ENCODE measurements at regions of chr4 and their contacts with region 1.

Region 1: GRCh38 chr4:13654158-13654797 is 26.8 kb upstream of the BOD1L1 start:
- DNase-seq: peak; percentile 50 to 82
- H3K4me3 ChIP-seq: peak overlapping the region; percentile 69
- H3K27ac ChIP-seq: no peak overlapping the region
- H3K4me1 ChIP-seq: peaks cover 20% of the 10 kb centered on the region
- H3K27me3 ChIP-seq: no peaks in the 10 kb centered on the region
- CTCF ChIP-seq: peak; percentile 83

Region 2: DNA sequence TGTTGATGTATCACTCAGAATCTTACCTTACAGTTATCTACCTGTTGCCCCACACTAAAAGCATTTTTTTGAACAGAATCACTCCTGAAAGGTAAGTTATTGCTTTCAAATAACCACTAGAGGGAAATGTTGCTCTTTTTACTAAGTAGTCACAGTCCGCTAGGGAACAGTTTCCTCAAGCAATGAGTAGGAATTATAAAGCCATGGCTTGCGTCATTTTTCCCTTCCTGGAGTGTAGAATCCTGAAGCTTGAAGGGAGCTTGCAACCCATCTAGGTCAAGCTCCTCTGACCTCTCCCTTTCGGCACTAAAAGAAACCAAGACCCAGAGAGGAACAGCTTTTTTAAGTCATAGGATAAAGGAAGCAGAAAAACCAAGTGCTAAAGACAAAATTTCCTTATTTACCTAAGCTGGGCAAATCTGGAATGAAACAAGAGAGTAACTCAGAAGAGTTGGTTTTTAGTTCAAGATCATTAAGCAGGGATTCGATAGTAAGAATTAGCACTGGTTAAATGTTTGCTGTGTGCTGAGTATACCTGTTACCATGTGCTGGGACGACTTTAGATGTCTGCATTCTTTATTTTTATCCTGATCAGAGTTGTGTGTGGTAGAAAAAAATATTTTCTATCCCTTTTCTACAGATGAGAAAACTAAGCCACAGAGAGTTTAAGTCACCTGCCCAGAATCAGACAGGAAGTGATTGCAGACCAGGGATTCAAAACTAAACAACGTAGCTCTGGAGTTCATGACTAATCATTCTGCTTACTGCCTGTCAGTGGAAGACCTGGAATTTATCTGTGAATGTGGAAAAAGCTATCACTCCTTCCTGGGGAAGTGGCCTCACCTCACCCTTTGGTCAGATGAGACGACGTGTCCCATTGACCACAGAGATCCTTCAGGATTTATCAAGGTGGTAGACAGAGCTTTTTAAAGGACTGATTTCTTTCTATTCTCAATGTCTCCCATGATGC is 801.7 kb before region 1 on chr4:
- CTCF ChIA-PET with region 1: interaction called, 5 read pairs
- POLR2A ChIA-PET with region 1: no interaction called
- intact Hi-C with region 1: loop called (anchors 5 kb)
- DNase-seq: peak; percentile 0 to 62
- H3K4me3 ChIP-seq: no peak overlapping the region
- H3K27ac ChIP-seq: no peak overlapping the region
- H3K4me1 ChIP-seq: no peaks in the 10 kb centered on the region
- H3K27me3 ChIP-seq: no peaks in the 10 kb centered on the region
- CTCF ChIP-seq: peak; percentile 64

Region 3: DNA sequence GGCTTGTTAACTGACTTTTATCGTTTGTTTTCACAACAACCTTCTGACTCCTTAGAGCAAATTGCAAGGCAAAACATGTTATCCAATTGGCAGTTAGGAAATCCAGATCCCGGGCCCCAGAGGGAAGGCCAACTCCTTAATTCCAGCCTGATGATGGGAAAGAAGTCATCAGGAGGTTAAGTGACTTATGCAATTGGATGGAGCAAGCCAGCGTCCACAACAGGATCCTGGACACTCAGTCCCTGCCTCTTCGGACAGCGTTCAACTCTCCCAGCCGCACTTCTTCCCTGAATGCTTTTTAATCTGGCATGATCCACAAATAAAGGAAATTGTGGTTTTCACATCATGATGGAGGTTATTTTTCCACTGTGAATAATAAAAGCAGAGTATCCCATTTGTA is 480.3 kb before region 1 on chr4:
- CTCF ChIA-PET with region 1: no interaction called
- POLR2A ChIA-PET with region 1: no interaction called
- intact Hi-C with region 1: no loop called
- DNase-seq: no peak
- H3K4me3 ChIP-seq: no peak overlapping the region
- H3K27ac ChIP-seq: no peak overlapping the region
- H3K4me1 ChIP-seq: no peaks in the 10 kb centered on the region
- H3K27me3 ChIP-seq: no peaks in the 10 kb centered on the region
- CTCF ChIP-seq: no peak

Region 4: DNA sequence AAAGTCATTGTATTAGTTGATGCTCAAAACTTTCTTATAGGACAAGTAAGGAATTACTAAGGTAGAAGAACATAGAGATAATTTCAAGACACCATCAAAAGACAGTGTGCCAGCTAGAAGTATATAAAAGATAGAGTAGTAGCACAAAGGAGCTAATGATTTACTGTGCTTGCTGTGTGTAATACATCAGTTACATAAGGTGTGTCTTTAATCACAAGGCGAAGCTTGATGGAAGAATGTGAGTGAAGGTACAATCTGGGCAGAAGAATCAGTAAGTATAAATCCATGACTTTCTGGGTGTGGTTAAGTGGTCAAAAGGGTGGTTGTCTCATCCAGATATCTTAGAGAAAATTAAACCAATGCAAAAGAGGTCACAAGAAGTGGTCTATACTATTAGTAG is 68.4 kb after region 1 on chr4:
- CTCF ChIA-PET with region 1: no interaction called
- POLR2A ChIA-PET with region 1: no interaction called
- intact Hi-C with region 1: no loop called
- DNase-seq: no peak
- H3K4me3 ChIP-seq: no peak overlapping the region
- H3K27ac ChIP-seq: no peak overlapping the region
- H3K4me1 ChIP-seq: no peaks in the 10 kb centered on the region
- H3K27me3 ChIP-seq: no peaks in the 10 kb centered on the region
- CTCF ChIP-seq: no peak

Region 5: DNA sequence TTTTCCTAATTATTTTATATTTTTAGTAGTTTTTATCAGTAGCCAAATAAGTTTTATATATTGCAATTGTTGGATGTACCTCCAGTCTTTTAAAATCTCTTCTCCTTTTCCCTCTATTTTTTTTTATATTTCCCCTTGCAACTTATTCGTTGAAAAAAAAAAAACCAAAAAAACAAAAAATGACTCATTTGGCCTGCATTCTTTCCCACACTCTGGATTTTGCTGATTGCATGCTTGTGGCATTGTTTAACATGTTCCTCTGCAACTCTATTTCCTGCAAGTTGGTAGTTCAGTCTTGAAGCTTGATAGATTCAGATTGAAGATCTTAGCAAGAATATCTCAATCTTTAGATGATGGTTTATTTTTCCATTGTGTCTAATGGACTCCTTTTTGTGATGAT is 233.8 kb after region 1 on chr4:
- CTCF ChIA-PET with region 1: no interaction called
- POLR2A ChIA-PET with region 1: interaction called, 5 read pairs
- intact Hi-C with region 1: loop called (anchors 5 kb)
- DNase-seq: peak; percentile 26 to 82
- H3K4me3 ChIP-seq: no peak overlapping the region
- H3K27ac ChIP-seq: peak overlapping the region; percentile 78
- H3K4me1 ChIP-seq: peaks cover 37% of the 10 kb centered on the region
- H3K27me3 ChIP-seq: no peaks in the 10 kb centered on the region
- CTCF ChIP-seq: no peak

Region 6: GRCh38 chr4:14168919-14169318 is 514.6 kb after region 1 on chr4:
- CTCF ChIA-PET with region 1: no interaction called
- POLR2A ChIA-PET with region 1: no interaction called
- intact Hi-C with region 1: loop called (anchors 10 kb)
- DNase-seq: peak; percentile 77 to 93
- H3K4me3 ChIP-seq: peak overlapping the region; percentile 41; the same call in 1 of the 2 replicates
- H3K27ac ChIP-seq: peak overlapping the region; percentile 99
- H3K4me1 ChIP-seq: peaks cover 37% of the 10 kb centered on the region
- H3K27me3 ChIP-seq: no peaks in the 10 kb centered on the region
- CTCF ChIP-seq: no peak

Region 7: DNA sequence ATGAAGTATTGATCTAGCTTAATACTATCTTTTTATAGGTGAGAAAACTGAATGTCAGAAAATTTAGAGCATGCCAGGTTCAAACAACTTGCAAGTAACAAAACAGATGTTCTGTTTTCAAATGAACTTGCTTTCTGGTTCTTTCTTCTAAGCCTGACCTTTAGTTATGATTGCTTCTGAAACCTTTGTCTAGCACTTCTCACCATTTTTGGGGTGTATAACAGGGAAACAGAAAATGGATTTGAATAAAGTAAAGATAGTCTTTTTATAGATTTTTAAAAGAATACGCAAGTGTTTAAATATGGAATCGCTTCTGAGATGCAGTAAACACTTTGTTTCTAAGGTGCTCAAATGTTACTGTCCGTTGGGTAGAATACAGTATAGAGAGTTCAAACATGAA is 660.9 kb after region 1 on chr4:
- CTCF ChIA-PET with region 1: no interaction called
- POLR2A ChIA-PET with region 1: no interaction called
- intact Hi-C with region 1: loop called (anchors 10 kb)
- DNase-seq: no peak
- H3K4me3 ChIP-seq: no peak overlapping the region
- H3K27ac ChIP-seq: no peak overlapping the region
- H3K4me1 ChIP-seq: no peaks in the 10 kb centered on the region
- H3K27me3 ChIP-seq: no peaks in the 10 kb centered on the region
- CTCF ChIP-seq: no peak

Region 8: GRCh38 chr4:14877246-14878225 is 1223.3 kb after region 1 on chr4:
- CTCF ChIA-PET with region 1: no interaction called
- POLR2A ChIA-PET with region 1: no interaction called
- intact Hi-C with region 1: loop called (anchors 1 kb)
- DNase-seq: no peak
- H3K4me3 ChIP-seq: no peak overlapping the region
- H3K27ac ChIP-seq: no peak overlapping the region
- H3K4me1 ChIP-seq: 0 out of 2 replicates have a peak, but pooled peaks cover 11% of the 10 kb centered on the region
- H3K27me3 ChIP-seq: no peaks in the 10 kb centered on the region
- CTCF ChIP-seq: no peak

Region 9: DNA sequence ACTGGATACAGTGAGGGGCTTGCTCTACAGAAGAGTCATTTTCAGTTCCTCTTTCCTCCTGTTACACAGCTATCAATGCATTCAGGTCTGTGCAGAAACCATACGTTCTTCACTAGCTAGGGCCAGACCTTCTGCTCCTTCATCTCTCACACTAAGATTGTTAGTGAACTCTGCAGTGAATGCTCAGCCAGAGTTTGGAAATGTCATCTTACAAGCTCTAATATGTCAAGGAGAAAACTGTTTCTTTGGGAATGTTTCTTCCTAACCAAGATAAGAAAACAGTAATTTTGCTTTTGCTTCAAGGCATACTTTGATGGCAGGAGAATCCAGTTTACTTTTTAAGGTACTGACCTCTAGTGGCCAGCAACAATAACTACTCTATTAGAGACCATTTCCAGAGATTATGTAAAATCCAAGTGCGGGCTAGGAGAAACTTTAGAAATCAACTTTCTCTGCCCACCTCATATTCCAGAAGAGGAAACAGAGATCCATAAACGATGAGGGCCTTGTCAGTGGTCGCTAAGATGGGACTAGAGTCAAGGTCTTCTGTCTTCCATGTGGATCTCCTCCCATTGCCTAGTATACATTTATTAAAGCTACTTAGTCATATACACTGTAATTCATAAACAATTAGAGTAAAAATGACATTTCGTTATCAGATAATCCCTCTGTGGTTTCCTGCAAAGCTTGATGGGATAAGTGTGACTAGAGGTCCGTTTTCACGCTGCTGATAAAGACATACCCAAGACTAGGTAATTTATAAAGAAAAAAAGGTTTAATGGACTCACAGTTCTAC is 1803.3 kb after region 1 on chr4:
- CTCF ChIA-PET with region 1: no interaction called
- POLR2A ChIA-PET with region 1: no interaction called
- intact Hi-C with region 1: loop called (anchors 5 kb)
- DNase-seq: no peak
- H3K4me3 ChIP-seq: no peak overlapping the region
- H3K27ac ChIP-seq: no peak overlapping the region
- H3K4me1 ChIP-seq: no peaks in the 10 kb centered on the region
- H3K27me3 ChIP-seq: no peaks in the 10 kb centered on the region
- CTCF ChIP-seq: peak; percentile 78